Activated B cell treated with CpG ODN at 0.5 μM for 24 hours (primary cell): ENCODE measurements at regions of chr10 and their contacts with region 1.

Region 1: DNA sequence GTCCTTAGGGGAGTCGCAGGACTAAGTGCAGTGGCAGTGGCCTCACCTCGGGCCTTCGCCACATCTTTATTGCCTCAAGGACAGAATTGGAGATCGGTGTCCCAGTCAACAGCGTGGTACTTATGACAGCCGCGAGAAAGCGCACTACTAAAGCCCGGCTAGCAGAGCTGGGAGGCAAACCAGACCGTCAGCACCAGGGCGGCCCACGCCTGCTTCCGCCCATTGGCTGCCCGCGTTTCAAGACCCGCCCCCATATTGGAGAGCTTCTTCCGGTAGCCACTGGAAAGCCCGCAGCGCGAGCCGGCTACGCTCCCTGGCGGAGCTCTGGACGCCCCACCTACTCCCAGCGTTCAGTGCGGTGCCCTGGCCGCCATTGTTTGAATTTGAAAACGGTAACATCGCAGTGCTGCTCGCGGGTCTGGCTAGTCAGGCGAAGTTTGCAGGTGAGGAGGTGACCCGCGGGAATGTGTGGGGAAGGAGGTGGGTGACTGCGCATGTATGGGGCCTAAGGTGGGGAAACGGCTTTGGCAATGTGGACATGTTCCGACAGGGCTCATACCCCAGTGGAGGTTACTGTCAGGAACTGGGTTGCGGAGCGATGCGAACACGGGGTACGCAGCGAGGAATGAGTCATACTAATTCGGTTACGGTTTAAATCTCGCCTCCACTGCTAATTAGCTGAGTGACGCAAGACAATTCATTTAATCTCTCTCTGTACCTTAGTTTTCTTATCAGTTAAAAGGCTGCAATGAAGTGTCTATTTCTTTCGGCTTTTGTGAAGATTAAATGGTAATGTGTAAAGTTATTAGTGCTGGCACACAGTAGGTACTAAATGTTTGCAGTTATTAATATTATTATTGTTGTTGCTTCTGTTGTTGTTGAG is at the start of gene KIF20B:
- DNase-seq: peak; percentile 91
- ATAC-seq: peak; percentile 97
- H3K4me3 Mint-ChIP-seq: peak within 1 kb of the TSS; percentile 96
- H3K27ac Mint-ChIP-seq: peak within 1 kb of the TSS; percentile 98
- H3K4me1 Mint-ChIP-seq: peaks cover 39% of the 10 kb centered on the region
- H3K27me3 Mint-ChIP-seq: no peaks in the 10 kb centered on the region
- CTCF ChIP-seq: no peak
- total RNA-seq, gene KIF20B: 23.8 and 24.0 TPM in 2 replicates

Region 2: DNA sequence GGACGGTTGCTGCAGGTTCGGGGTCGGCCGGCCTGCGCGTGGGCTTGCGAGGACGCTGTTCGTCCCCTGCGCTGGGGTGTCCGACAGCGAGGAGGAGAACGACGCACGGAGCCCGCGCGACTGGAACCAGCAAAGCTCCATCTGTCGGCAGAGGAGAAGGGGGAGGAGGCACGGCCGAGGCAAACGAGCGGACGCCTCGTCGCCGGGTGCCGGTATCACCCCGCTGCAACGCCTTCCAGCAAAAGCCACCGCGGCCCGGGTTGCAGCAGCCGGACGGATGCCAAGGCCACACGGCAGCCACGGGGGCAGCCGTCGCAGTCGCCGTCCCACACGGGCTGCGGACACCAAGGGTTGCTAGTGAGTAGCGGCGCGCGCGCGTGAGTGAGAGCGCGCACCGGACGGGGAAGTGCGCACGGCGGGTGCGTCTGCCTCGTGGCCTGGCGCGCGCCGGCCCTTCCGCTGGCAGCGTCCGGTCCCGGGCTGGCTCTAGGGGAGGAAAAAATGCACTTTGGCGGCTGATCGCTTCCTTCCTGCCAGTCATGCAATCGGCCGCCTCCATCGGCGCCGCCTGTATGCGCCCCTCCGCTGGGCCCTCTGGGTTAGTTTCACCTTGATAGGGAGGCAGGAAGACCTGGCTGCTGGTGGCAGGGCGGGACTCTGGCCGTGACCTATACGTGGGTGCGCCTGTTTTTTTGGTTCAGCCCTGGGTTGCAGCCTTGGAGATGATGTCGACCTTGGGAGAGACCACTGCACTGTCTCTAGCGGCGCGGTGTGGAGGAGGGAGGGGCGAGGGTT is 821.0 kb before region 1 on chr10:
- CTCF ChIA-PET with region 1: no interaction called
- POLR2A ChIA-PET with region 1: no interaction called
- intact Hi-C with region 1: loop called (anchors 5 kb)
- DNase-seq: peak; percentile 77
- ATAC-seq: peak; percentile 71
- H3K4me3 Mint-ChIP-seq: peak overlapping the region; percentile 96
- H3K27ac Mint-ChIP-seq: peak overlapping the region; percentile 99
- H3K4me1 Mint-ChIP-seq: peaks cover 52% of the 10 kb centered on the region
- H3K27me3 Mint-ChIP-seq: no peaks in the 10 kb centered on the region
- CTCF ChIP-seq: no peak

Region 3: DNA sequence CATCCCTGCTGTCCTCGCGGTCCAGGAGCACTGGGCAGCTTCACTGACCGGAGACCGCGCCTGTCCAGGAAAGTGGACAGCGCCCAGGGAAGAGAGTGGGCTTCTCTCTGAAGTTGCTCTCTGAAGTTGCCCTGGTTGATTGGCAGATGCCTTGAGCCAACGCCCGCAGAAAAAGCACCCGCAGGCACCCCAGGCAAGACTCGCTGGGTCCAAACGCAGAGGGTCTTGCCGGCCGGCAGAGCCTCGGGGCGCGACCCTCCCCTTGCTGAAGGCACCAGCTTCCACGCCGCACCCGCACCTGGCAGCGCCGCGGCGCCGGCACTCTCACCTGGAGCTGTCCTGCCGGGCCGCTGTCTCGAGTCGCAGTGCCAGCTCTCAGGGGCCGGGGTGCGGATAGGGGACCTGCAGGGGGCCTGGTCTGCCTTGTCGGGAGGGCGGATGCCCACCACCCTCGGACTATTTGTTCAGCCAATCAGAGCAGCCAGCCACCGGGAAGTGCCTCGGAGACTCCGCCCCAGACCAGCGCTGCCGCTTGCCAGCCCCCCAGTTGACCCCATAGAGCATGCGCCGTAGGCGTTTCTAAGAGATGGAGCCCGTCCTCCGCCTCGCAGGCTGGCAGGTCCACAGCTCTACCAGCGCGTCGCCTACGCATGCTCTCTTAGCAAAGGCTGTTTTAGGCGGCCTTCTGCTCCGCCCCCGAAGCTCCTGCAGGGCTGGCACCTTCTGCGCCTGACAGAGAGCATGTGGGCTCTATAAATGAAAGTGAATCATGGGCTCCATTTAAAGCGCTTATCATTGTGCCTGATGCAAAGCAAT is 449.9 kb before region 1 on chr10 and contains the start of gene LIPA:
- CTCF ChIA-PET with region 1: no interaction called
- POLR2A ChIA-PET with region 1: interaction called, 3 read pairs
- intact Hi-C with region 1: loop called (anchors 2 kb)
- DNase-seq: peak; percentile 90
- ATAC-seq: peak; percentile 93
- H3K4me3 Mint-ChIP-seq: peak within 1 kb of the TSS; percentile 91
- H3K27ac Mint-ChIP-seq: peak within 1 kb of the TSS; percentile 79
- H3K4me1 Mint-ChIP-seq: peaks cover 26% of the 10 kb centered on the region
- H3K27me3 Mint-ChIP-seq: peaks cover 3% of the 10 kb centered on the region
- CTCF ChIP-seq: no peak
- total RNA-seq, gene LIPA: 32.8 and 35.3 TPM in 2 replicates

Region 4: DNA sequence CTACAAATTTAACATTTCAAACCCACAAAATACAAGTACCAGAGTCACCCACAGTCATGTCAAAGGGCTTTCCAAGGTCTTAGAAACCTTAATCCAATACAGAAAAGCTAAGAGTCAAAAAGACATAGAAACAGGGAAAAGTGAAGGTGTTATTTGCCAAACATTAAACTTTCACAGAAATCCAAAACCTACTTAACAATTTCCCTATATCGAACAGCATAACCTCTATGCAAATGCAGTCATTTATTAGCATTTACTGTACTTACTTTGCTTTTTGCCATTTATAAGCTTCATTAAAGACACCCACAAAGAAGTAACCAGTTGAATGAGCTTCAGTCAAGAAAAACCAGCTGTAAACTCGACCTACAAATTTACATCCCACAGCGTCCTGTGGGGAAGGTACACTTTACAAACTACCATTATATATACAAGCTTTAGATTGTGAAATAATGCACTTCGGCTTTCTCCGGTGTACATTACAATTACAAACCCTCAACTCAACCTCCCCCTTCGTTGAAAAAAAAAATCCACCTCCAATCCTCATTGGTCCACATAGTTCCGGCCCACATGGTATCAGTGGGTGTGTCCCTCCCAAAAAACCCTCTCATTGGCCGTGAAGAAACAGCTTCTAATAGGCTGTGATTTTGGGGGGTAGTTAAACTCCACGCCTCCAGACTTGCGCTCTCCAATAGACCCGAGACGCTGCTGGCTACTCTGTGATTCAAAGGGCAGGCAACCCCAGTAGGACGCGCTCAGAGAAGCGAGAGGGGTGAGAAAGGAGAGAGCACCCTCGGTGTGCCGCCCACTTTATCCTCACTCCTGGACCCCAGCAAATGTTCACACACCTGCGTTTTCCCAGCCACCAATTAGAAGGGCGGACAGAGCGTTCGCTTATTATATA is 57.8 kb before region 1 on chr10:
- CTCF ChIA-PET with region 1: interaction called, 6 read pairs
- POLR2A ChIA-PET with region 1: interaction called, 28 read pairs
- intact Hi-C with region 1: loop called (anchors 1 kb)
- DNase-seq: peak; percentile 46
- ATAC-seq: peak; percentile 91
- H3K4me3 Mint-ChIP-seq: no peak overlapping the region
- H3K27ac Mint-ChIP-seq: no peak overlapping the region
- H3K4me1 Mint-ChIP-seq: peaks cover 13% of the 10 kb centered on the region
- H3K27me3 Mint-ChIP-seq: no peaks in the 10 kb centered on the region
- CTCF ChIP-seq: no peak

Region 5: GRCh38 chr10:89738551-89739209 is 37.2 kb after region 1 on chr10:
- CTCF ChIA-PET with region 1: interaction called, 3 read pairs
- POLR2A ChIA-PET with region 1: interaction called, 15 read pairs
- intact Hi-C with region 1: loop called (anchors 1 kb)
- DNase-seq: no peak
- ATAC-seq: peak; percentile 93
- H3K4me3 Mint-ChIP-seq: peak overlapping the region; percentile 60
- H3K27ac Mint-ChIP-seq: peak overlapping the region; percentile 78
- H3K4me1 Mint-ChIP-seq: peaks cover 26% of the 10 kb centered on the region
- H3K27me3 Mint-ChIP-seq: no peaks in the 10 kb centered on the region
- CTCF ChIP-seq: no peak

Region 6: GRCh38 chr10:90871766-90872647 is 1170.5 kb after region 1 on chr10 and contains the start of gene RPP30:
- CTCF ChIA-PET with region 1: no interaction called
- POLR2A ChIA-PET with region 1: no interaction called
- intact Hi-C with region 1: loop called (anchors 1 kb)
- DNase-seq: peak; percentile 77
- ATAC-seq: peak; percentile 97
- H3K4me3 Mint-ChIP-seq: peak within 1 kb of the TSS; percentile 96
- H3K27ac Mint-ChIP-seq: peak within 1 kb of the TSS; percentile 89
- H3K4me1 Mint-ChIP-seq: peaks cover 30% of the 10 kb centered on the region
- H3K27me3 Mint-ChIP-seq: peaks cover 14% of the 10 kb centered on the region
- CTCF ChIP-seq: no peak
- total RNA-seq, gene RPP30: 43.7 and 44.6 TPM in 2 replicates